ENCODE measurements at regions of chr20 and their contacts with region 1.

Region 1: DNA sequence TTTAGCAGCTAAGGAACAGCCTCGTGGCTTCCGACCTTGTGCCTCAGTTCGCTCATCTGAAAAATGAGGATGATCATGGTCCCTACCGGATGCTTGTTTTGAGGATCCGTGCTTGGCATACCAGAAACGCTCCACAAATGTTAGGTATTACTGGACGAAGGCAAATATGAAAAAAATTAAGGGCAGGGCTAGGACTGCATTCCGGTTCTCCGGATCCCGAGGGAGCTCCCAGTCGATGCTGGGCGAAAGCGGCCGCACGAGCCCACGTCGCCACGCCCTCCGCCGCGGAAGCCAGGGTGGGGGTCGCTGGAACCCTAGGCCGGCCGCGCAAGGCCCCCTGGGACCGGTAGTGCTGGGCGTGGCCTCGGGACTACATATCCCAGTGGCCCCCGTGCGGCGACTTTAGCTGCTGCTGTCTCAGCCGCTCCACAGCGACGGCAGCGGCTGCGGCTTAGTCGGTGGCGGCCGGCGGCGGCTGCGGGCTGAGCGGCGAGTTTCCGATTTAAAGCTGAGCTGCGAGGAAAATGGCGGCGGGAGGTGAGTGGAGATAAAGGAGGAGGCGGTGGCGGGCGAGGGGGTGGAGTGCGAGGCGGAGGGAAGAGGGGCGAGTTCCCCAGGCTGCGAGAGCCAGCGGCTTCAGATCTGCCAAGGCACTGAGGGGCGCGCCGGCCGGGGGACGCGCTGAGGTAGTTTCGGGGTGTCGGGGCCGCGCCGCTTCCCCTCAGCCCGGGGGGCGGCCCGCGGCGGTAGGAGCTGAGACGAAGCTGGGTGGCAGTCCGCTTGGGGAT is at the start of gene NCOA3:
- DNase-seq: peak; percentile 93 to 97 (median 96)
- H3K4me3 ChIP-seq: peak within 1 kb of the TSS; percentile 68 to 98 (median 91)
- H3K27ac ChIP-seq: peak within 1 kb of the TSS; percentile 12 to 94 (median 84)
- H3K27me3 ChIP-seq: no peaks in the 10 kb centered on the region
- CTCF ChIP-seq: peak in 54 of 56 donors; percentile 30 to 81 (median 61)
- total RNA-seq, gene NCOA3: 15.5 to 33.7 (median 20.9) TPM

Region 2: DNA sequence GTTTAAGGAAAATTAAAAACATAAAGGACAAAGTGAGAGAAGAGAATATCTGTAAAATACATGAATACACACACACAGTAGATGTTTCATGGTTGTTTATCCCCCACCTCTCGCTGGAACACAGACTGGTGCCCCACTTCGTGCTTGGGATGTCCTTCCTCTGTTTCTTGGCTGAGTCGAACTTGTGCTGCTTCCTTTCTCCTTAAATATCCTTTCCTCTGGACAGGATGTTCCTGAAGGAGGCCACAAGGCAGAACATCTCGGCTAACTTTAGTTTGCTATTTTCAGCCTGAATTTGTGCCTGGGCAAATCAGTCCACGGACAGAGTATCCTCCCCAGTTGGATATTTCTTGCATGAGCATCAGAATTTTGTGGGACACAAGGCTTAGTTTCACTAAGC is 90.5 kb before region 1 on chr20:
- intact Hi-C with region 1: loop called in 1 of 2 experiments (anchors 5 kb)
- DNase-seq: peak in 2 of 10 donors; percentile 29 to 42
- H3K4me3 ChIP-seq: no peak overlapping the region
- H3K27ac ChIP-seq: peak overlapping the region in 41 of 59 donors; percentile 8 to 83 (median 52)
- H3K27me3 ChIP-seq: no peaks in the 10 kb centered on the region
- CTCF ChIP-seq: no peak

Region 3: DNA sequence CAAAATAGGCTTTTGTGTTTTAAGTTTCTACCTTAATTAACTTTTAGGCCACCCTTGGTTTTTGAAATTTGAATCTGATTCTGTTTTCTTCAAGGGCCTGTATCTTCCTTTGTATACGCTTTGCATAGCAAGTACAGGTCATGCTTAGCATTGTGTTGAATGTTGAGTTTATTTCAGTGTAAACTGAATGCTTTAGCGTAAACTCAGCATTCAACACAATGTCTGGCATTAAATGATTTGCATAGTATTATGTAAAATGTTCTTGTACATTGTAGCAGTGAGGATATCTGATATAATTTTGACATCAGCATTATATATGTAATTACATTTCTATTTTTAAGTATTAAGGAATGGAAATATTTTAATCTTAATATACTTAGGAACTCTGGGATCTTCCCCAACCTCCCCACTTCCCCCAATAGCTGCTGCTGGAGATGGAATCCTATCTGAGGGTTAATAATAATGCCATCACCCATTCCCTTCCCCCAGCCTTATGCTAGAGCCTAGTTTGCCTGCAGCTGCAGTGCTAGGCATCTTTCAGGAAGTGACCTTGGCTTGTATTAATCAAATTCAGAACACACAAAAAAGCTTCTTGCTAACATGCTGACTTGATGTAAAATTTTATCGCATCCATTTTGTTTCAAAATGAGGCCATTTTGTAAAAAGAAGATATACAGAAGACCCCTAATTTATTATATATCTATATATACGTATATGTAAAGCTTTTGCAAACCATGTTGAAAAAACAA is 73.1 kb after region 1 on chr20:
- intact Hi-C with region 1: loop called in 1 of 2 experiments (anchors 2 kb)
- DNase-seq: no peak
- H3K4me3 ChIP-seq: peak overlapping the region in 8 of 59 donors; percentile 8 to 55 (median 13)
- H3K27ac ChIP-seq: peak overlapping the region in 51 of 59 donors; percentile 3 to 85 (median 57)
- H3K27me3 ChIP-seq: no peaks in the 10 kb centered on the region
- CTCF ChIP-seq: no peak

Region 4: DNA sequence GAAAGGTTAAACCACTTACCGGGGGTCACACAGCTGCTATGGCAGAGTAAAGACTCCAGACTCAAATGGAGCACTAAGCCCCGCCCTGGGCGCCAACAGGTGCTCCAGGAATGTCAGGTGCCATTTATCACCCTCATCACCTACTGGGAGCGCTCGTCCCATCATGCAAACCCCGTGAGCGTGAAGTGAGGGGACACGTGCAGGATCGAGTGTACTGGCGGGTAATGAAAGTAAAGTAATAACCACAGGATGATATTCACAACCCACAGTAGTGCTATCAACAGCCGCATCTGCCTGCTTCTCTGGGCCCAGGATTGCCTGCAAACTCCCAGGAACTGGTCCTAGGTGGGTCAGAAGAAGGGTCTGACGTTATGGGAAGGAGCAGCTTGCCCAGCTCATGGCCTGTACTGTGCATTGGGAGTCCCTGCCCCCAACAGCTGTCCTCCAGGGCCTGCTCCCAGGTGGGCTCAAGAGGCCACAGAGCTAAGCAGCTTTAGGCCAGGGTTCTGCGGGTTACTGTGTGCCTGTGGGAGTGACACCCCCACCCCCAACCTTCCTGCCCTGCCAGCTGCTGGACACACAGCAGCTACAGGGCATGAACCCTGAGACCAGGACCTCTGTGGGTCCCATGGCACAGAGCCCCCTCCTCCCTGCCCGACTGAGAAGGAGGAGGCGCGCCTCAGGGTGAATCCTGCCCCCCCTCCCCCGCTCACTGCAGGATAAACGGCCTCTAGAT is 404.1 kb after region 1 on chr20:
- intact Hi-C with region 1: no loop called
- DNase-seq: no peak
- H3K4me3 ChIP-seq: no peak overlapping the region
- H3K27ac ChIP-seq: no peak overlapping the region
- H3K27me3 ChIP-seq: peaks cover 0 to 12% (median 0%) of the 10 kb centered on the region in 45 donors
- CTCF ChIP-seq: no peak

Measured in dorsolateral prefrontal cortex (tissue), 120 donors.